Calu3 (cell line): ENCODE measurements at regions of chr4 and their contacts with region 1.

Region 1: DNA sequence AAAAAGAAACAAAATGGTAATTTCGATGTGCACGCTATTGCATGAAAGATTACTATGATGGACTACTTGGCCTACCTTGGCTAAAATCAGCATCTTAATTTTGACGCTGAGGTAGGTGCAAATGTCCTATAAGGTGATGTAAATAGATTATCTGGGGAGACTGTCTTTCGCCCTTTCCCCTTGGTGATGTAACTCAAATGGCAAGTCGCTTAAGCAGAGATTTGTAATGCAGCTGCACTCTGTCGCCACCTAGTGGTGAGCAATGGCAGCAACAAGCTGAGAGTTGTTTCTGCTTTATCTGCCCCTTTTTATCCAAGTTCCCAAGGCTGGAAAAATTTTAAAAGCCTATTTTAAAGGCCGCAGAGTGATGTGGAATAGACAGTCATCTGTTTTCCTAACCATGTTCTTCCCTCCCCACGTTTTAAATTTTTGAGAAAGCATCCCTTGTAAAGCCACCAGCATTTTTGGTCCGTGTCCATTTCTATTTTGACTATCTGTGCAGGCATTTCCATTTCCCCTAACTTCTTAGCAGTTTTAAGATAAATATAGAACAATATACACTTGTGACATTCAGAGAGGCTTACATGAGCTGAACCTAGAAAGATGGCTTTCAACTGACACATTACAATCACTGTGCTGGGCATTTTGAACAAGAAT is 62.4 kb upstream of the PDLIM3 start:
- DNase-seq: peak; percentile 60
- H3K4me3 Mint-ChIP-seq: no peak overlapping the region
- H3K27ac Mint-ChIP-seq: no peak overlapping the region
- H3K4me1 Mint-ChIP-seq: no peaks in the 10 kb centered on the region
- H3K27me3 Mint-ChIP-seq: no peaks in the 10 kb centered on the region
- CTCF ChIP-seq: peak; percentile 82

Region 2: GRCh38 chr4:185425647-185426352 is 171.9 kb before region 1 on chr4 and contains the start of gene UFSP2:
- CTCF ChIA-PET with region 1: interaction called, 4 read pairs
- intact Hi-C with region 1: loop called (anchors 5 kb)
- DNase-seq: peak; percentile 79
- H3K4me3 Mint-ChIP-seq: peak within 1 kb of the TSS; percentile 79
- H3K27ac Mint-ChIP-seq: peak within 1 kb of the TSS; percentile 75
- H3K4me1 Mint-ChIP-seq: peaks cover 8% of the 10 kb centered on the region
- H3K27me3 Mint-ChIP-seq: no peaks in the 10 kb centered on the region
- CTCF ChIP-seq: no peak
- total RNA-seq, gene UFSP2: 11.8 and 14.8 TPM in 2 replicates

Region 3: GRCh38 chr4:185471235-185472102 is 126.2 kb before region 1 on chr4 and contains the start of gene CCDC110:
- CTCF ChIA-PET with region 1: no interaction called
- intact Hi-C with region 1: loop called (anchors 1 kb)
- DNase-seq: peak; percentile 89
- H3K4me3 Mint-ChIP-seq: peak within 1 kb of the TSS; percentile 68
- H3K27ac Mint-ChIP-seq: no peak within 1 kb of the TSS
- H3K4me1 Mint-ChIP-seq: no peaks in the 10 kb centered on the region
- H3K27me3 Mint-ChIP-seq: peaks cover 37% of the 10 kb centered on the region
- CTCF ChIP-seq: peak; percentile 56
- total RNA-seq, gene CCDC110: not detected in 2 replicates

Region 4: DNA sequence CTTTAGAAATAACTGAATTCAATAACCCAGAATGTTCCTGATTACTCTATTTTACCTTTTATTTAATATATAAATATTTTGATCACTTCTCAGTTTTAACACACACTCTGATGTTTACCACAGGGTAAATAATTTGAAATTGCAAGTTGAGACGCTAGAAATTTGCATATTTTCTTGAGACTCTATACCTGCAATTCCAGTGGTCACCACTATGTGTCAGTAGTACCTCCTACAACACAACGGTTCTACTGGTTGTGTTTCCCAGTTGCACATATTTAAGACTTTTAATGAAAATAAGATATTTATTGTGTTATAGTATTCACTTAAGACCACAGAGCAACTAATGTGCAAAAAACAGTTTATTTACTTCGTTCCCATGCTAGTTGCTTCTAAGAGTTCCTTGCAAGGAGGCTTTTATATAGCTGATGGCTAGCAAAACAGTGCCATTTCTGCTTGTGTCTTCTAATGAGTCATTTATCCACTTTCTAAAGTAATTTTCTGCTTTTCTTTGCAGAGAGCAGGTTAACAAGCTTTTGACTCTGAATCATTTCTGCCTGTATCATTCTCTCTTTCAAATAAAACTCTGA is 36.5 kb after region 1 on chr4:
- CTCF ChIA-PET with region 1: no interaction called
- intact Hi-C with region 1: no loop called
- DNase-seq: no peak
- H3K4me3 Mint-ChIP-seq: no peak overlapping the region
- H3K27ac Mint-ChIP-seq: no peak overlapping the region
- H3K4me1 Mint-ChIP-seq: no peaks in the 10 kb centered on the region
- H3K27me3 Mint-ChIP-seq: no peaks in the 10 kb centered on the region
- CTCF ChIP-seq: peak; percentile 30

Region 5: DNA sequence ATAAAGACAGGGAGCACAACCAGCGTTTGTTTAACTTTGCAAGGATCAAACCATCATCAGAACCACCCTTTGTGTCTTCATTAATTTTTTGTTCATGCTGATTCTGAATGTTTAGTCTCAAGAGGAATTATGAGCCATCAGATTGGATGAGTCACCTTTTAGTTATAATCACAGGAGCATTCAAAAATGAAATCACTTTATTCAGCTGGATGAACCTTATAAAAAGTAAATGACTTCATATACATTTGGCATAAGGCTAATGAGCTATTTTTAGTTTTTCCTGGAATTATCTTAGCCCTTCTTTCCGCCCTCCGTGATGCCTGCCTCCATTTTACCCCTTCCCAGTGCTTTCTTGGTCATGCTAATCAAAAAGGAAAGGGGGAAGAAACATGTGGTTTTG is 110.7 kb after region 1 on chr4:
- CTCF ChIA-PET with region 1: no interaction called
- intact Hi-C with region 1: no loop called
- DNase-seq: no peak
- H3K4me3 Mint-ChIP-seq: no peak overlapping the region
- H3K27ac Mint-ChIP-seq: no peak overlapping the region
- H3K4me1 Mint-ChIP-seq: peaks cover 33% of the 10 kb centered on the region
- H3K27me3 Mint-ChIP-seq: no peaks in the 10 kb centered on the region
- CTCF ChIP-seq: no peak